MCF 10A (cell line): ENCODE measurements at regions of chr5 and their contacts with region 1.

Region 1: DNA sequence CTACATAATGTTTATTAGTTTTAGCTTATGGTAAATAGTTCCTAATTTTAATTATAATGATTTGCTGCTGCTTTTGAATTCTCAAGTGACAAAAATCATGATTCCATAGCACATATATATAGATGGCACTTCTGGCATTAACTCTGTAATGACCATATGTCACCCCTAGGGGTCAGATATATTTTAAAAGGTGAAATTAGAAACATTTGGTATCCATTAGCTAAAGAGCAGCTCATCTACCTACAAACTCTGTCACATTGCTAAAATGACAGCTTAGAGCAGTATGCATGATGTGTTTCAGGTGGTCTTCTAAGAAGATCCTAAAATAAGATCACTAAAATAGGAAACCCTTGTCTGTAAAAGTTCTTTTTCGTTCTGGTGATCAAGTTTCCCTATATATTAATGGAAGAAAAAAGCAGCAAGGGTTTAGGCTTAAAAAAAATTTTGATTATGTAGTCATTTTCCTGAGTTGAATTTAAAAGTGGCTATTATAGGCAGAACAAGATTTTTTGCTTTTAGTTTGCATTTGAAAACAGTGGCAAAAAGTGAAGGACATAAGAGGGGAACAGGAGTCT is 157.7 kb upstream of the POU5F2 start:
- DNase-seq: peak; percentile 24
- H3K4me3 Mint-ChIP-seq: no peak overlapping the region
- H3K27ac Mint-ChIP-seq: no peak overlapping the region
- H3K4me1 Mint-ChIP-seq: no peaks in the 10 kb centered on the region
- H3K27me3 Mint-ChIP-seq: no peaks in the 10 kb centered on the region
- CTCF ChIP-seq: peak; percentile 39

Region 2: GRCh38 chr5:93092349-93093105 is 806.6 kb before region 1 on chr5:
- CTCF ChIA-PET with region 1: no interaction called
- POLR2A ChIA-PET with region 1: no interaction called
- intact Hi-C with region 1: loop called (anchors 10 kb)
- DNase-seq: peak; percentile 40
- H3K4me3 Mint-ChIP-seq: no peak overlapping the region
- H3K27ac Mint-ChIP-seq: no peak overlapping the region
- H3K4me1 Mint-ChIP-seq: no peaks in the 10 kb centered on the region
- H3K27me3 Mint-ChIP-seq: no peaks in the 10 kb centered on the region
- CTCF ChIP-seq: peak; percentile 35

Region 3: GRCh38 chr5:93831449-93831848 is 67.7 kb before region 1 on chr5:
- CTCF ChIA-PET with region 1: interaction called, 5 read pairs
- POLR2A ChIA-PET with region 1: interaction called, 3 read pairs
- intact Hi-C with region 1: loop called (anchors 5 kb)
- DNase-seq: peak; percentile 69
- H3K4me3 Mint-ChIP-seq: no peak overlapping the region
- H3K27ac Mint-ChIP-seq: peak overlapping the region; percentile 3
- H3K4me1 Mint-ChIP-seq: peaks cover 7% of the 10 kb centered on the region
- H3K27me3 Mint-ChIP-seq: no peaks in the 10 kb centered on the region
- CTCF ChIP-seq: no peak

Region 4: DNA sequence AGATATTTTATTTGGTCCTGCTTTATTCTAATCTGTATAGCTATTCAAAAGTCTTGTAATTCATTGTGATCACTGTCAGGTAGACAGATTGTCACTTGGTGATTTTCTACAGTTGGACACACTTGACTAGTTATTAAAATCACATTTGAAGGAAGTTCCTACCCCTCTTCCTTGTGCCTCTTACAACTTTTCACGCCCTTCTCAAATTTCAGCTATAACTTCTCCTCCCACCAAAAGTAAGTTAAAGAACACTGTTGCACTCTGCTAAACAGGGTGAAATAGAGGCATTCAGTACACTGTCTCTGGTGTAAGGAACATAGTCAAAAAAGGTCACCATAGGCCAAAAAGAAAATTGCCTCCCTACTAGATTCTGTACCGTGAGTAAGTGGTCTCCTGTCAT is 15.7 kb before region 1 on chr5:
- CTCF ChIA-PET with region 1: interaction called, 14 read pairs
- POLR2A ChIA-PET with region 1: no interaction called
- intact Hi-C with region 1: no loop called
- DNase-seq: peak; percentile 9
- H3K4me3 Mint-ChIP-seq: no peak overlapping the region
- H3K27ac Mint-ChIP-seq: no peak overlapping the region
- H3K4me1 Mint-ChIP-seq: peaks cover 6% of the 10 kb centered on the region
- H3K27me3 Mint-ChIP-seq: no peaks in the 10 kb centered on the region
- CTCF ChIP-seq: no peak

Region 5: DNA sequence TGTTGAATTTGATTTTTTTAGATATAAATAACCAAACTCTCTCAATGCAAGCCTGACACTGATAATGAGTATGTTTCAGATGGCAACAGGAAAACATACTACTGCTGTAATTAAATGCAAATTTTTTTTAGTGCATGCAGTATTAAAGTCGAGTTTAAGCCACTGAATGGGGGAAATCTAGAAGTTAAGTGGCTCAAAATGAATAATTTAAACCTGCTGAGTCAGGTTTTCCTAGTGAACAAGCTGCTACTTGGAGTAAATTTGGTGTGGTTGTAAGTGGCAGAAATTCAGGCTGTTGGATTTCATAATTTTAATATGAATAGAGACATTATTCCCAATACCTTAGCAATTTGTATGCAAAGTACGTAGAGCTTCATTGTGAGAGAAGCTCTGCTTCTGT is 841.2 kb after region 1 on chr5:
- CTCF ChIA-PET with region 1: interaction called, 4 read pairs
- POLR2A ChIA-PET with region 1: no interaction called
- intact Hi-C with region 1: loop called (anchors 5 kb)
- DNase-seq: no peak
- H3K4me3 Mint-ChIP-seq: no peak overlapping the region
- H3K27ac Mint-ChIP-seq: peak overlapping the region; percentile 31
- H3K4me1 Mint-ChIP-seq: no peaks in the 10 kb centered on the region
- H3K27me3 Mint-ChIP-seq: no peaks in the 10 kb centered on the region
- CTCF ChIP-seq: no peak